Heart right ventricle (tissue), 16 donors: ENCODE measurements at regions of chr6 and their contacts with region 1.

Region 1: DNA sequence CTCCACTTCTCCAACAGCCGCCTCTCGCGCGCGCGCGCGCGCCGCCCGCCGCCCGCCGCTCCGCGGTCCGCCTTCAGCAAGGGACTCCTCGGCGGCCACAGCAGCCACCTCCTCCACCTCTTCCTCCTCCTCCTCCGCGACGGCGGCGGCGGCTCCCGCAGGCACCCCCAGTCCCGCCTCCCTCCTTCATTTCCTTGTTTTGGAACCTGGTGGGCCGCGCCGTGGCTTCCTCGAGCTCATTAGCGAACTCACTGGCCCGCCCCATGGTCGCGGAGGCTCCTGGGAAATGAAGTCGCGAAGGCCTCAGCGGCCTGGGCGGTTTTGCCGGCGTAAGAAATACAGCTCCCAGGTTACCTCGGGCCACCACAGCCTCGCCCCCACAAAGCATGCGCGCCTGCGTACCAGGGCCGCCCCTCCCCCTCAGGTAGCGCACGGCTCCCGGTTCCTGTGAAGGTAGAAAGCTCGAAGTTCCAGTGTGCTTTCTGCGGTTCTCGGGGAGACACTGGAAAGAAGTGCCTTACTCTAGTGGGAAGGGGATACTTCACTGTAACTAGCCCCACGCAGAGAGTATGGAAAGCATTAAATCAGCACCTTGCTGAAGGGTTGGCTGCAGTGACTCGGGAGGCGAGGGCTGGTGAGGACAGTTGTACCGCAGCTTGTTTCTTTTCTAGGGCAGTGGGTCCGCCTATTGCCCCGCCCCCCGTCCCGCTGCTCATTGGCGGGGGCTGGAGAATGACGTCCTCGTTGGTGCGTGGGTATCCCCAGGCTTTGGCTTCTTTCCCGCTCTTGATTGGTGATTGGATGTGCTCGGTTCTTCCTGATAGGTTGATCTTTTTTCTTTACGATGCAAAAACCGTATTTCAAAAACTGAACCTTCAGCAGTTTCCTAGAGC is at the start of gene CDK19:
- DNase-seq: peak; percentile 97 to 98
- ATAC-seq: peak; percentile 96 to 99 (median 98)
- H3K4me3 ChIP-seq: peak within 1 kb of the TSS; percentile 70 to 97 (median 88)
- H3K27ac ChIP-seq: peak within 1 kb of the TSS; percentile 87 to 96 (median 94)
- H3K4me1 ChIP-seq: peaks cover 0 to 45% (median 16%) of the 10 kb centered on the region in 9 donors
- H3K27me3 ChIP-seq: no peaks in the 10 kb centered on the region
- CTCF ChIP-seq: no peak
- total RNA-seq, gene CDK19: 4.6 to 13.0 (median 8.7) TPM

Region 2: DNA sequence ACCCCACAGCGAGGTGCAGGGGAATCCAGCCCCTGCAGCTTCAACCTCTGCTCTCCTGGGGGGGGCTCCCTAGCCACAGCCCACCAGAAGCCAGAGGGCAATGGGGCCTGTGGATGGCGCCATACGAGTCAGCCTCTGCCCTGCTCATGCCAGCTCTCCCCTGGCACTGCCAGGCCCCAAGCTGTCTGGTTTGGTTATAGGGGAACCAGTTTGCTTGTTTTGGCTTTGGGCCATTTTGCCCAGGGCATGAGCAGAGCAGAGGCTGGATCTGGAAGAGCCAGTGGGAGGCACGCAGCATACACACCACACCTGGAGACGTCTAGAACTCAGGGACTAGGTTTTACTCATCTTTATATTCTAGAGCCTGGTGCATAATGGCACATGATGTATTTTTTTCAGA is 272.4 kb before region 1 on chr6:
- intact Hi-C with region 1: loop called in 3 of 10 experiments (anchors 5 to 10 kb)
- DNase-seq: peak in 1 of 2 donors; percentile 15
- ATAC-seq: peak; percentile 26 to 63 (median 44)
- H3K4me3 ChIP-seq: no peak overlapping the region
- H3K27ac ChIP-seq: peak overlapping the region; percentile 37 to 90 (median 88)
- H3K4me1 ChIP-seq: peaks cover 9 to 37% (median 20%) of the 10 kb centered on the region in 9 donors
- H3K27me3 ChIP-seq: no peaks in the 10 kb centered on the region
- CTCF ChIP-seq: no peak

Region 3: DNA sequence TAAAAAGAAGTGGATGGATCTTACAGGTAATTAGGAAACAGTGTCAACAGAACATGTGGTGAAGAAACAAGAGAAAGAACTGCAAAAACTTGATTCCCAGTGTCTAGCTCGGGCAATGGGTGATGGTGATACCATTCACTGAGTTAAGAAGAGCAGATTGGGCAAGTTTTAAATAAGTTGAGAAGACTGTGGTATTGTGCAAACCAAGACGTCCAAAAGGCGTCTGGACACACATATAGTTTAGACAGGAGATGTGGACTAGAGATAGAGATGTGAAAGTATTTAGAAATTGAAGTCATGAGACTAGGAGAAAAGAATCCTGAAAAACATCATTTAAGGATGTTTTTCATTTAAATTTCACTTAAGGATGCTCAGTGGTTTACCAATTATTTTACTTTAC is 54.1 kb before region 1 on chr6:
- intact Hi-C with region 1: no loop called
- DNase-seq: no peak
- ATAC-seq: no peak
- H3K4me3 ChIP-seq: no peak overlapping the region
- H3K27ac ChIP-seq: no peak overlapping the region
- H3K4me1 ChIP-seq: no peaks in the 10 kb centered on the region
- H3K27me3 ChIP-seq: no peaks in the 10 kb centered on the region
- CTCF ChIP-seq: no peak

Region 4: DNA sequence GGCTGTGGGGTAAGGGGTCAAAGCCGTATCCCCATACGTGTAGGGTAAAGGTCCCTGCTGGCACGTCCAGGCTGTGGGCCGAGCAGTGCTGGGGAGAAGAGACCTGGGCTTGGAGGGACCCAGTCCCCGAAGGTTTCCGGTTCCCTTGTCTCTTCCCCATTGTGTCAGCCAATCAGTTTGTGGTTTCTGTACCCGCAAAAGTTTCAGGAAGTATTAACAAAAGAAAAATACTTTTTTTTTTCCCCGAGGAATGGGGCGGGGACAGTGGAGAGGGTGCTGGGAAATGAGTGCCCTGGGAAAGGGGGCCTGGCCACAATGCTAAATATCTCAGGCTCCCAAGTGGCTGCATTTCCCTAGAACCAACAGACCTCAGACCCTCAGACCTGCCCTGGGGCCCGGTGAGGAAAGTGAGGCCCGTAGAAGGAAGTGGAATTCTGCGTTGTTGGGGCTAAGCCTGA is 43.9 kb after region 1 on chr6:
- intact Hi-C with region 1: no loop called
- DNase-seq: peak in 1 of 2 donors; percentile 22
- ATAC-seq: peak in 3 of 8 donors; percentile 33 to 48 (median 44)
- H3K4me3 ChIP-seq: peak overlapping the region in 1 of 10 donors; percentile 36
- H3K27ac ChIP-seq: peak overlapping the region in 1 of 10 donors; percentile 86
- H3K4me1 ChIP-seq: peaks cover 0 to 6% (median 0%) of the 10 kb centered on the region in 9 donors
- H3K27me3 ChIP-seq: no peaks in the 10 kb centered on the region
- CTCF ChIP-seq: no peak